RWPE1 (cell line): ENCODE measurements at regions of chr10 and their contacts with region 1.

Region 1: GRCh38 chr10:84537447-84537931 is 209.1 kb downstream of the CCSER2 start:
- DNase-seq: peak; percentile 81
- H3K27ac ChIP-seq: no peak overlapping the region
- CTCF ChIP-seq: peak; percentile 81

Region 2: GRCh38 chr10:84264611-84265141 is 272.8 kb before region 1 on chr10:
- CTCF ChIA-PET with region 1: interaction called, 18 read pairs
- POLR2A ChIA-PET with region 1: no interaction called
- DNase-seq: peak; percentile 78
- H3K27ac ChIP-seq: no peak overlapping the region
- CTCF ChIP-seq: peak; percentile 92

Region 3: DNA sequence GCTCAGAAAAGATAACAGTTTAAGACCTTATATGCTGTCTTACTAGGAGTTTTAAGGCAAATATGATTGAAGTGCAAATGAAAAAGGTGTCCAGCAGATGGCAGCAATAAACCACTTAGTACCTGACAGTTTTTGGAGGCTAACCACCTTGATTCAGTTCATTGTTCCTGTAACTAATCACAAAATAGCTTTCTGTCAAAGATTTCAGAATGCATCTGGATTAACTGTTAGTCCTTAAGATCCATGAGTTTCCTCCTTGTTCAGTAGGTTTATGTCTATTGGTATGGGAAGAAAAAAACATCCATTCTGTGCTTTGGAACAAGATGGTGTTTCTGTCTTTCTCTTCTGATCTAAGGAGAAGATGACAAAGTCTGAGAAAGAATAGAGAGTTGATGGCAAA is 162.5 kb before region 1 on chr10:
- CTCF ChIA-PET with region 1: interaction called, 49 read pairs
- POLR2A ChIA-PET with region 1: no interaction called
- DNase-seq: peak; percentile 41
- H3K27ac ChIP-seq: no peak overlapping the region
- CTCF ChIP-seq: peak; percentile 80

Region 4: DNA sequence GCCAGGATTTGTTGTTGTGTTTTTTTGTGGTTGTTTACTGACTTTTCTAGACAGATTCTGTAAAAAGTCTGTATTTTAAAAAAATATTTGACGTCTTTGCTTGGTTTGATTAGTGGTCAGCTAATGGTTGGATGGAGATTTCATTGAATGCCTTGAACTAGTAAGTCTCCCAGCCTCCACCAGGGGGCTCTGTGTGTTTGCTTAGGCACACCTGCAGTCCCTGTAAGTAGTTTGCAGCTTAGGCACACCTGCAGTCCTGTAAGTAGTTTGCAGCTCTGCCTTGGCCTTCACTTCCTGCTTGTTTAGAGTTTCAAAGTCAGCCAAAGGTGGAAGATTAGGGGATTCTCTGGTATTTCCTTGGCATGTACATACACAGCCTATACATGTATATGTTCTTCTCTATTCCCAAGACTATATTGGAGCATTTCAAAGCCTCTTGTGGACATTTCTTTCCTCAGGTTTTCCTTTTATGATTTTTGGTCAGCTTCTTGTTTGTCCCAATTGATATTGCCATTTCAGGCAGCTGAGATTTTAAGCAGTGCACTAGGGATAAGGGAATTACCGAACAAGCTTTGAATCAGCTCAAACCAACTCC is 107.5 kb before region 1 on chr10:
- CTCF ChIA-PET with region 1: interaction called, 16 read pairs
- POLR2A ChIA-PET with region 1: no interaction called
- DNase-seq: peak; percentile 64
- H3K27ac ChIP-seq: no peak overlapping the region
- CTCF ChIP-seq: peak; percentile 60

Region 5: DNA sequence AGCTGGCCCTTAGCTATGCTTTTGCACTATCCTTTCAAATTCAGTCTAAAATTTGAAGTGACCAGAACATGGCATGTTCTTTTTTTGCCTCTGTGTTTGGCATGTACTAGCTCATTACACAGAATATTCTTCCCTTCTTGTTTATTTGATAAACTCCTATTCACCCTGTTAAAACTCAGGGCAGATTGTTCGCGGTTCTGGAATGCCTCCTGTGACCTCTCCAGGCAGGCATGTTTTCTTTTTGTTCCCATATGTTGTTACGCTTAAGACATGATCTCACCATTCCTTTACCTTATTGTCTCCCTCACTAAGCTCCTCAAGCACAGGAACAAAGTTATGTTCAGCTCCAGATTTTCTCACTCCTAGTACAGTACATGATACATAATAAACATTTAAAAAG is 27.4 kb before region 1 on chr10:
- CTCF ChIA-PET with region 1: no interaction called
- POLR2A ChIA-PET with region 1: no interaction called
- DNase-seq: no peak
- H3K27ac ChIP-seq: no peak overlapping the region
- CTCF ChIP-seq: no peak